ENCODE measurements at regions of chr6 and their contacts with region 1.

Region 1: DNA sequence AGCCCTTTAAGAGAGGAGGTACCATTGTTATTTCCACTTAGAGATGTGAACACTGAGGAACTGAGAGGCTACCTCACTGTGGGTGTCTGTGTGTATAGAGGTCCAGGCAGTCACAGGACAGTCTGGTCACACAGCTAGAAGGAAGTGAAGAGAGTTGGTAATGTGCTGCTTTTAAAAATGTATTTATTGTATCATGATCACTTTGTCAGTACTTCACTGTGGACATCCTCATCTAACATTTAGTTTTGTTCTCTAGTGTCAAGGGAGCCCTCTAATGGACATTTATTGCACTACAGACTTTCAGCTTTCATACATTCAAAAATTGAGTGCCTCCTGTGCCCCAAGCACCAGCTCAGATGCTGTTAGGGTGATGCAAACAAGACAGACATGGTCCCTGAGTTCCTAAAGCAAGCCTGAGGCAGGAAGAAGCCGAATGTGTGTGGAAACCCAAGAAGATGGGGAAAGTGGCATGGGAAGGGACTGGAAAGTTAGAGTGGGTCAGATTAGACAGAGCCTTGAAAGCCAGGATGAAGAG is 123.0 kb downstream of the SLC16A10 start:
- DNase-seq: peak; percentile 44
- H3K4me3 ChIP-seq: no peak overlapping the region
- H3K27ac ChIP-seq: no peak overlapping the region
- H3K4me1 ChIP-seq: no peaks in the 10 kb centered on the region
- H3K27me3 ChIP-seq: no peaks in the 10 kb centered on the region
- CTCF ChIP-seq: peak; percentile 19 to 65 (median 61)
- POLR2A ChIP-seq: no peak

Region 2: DNA sequence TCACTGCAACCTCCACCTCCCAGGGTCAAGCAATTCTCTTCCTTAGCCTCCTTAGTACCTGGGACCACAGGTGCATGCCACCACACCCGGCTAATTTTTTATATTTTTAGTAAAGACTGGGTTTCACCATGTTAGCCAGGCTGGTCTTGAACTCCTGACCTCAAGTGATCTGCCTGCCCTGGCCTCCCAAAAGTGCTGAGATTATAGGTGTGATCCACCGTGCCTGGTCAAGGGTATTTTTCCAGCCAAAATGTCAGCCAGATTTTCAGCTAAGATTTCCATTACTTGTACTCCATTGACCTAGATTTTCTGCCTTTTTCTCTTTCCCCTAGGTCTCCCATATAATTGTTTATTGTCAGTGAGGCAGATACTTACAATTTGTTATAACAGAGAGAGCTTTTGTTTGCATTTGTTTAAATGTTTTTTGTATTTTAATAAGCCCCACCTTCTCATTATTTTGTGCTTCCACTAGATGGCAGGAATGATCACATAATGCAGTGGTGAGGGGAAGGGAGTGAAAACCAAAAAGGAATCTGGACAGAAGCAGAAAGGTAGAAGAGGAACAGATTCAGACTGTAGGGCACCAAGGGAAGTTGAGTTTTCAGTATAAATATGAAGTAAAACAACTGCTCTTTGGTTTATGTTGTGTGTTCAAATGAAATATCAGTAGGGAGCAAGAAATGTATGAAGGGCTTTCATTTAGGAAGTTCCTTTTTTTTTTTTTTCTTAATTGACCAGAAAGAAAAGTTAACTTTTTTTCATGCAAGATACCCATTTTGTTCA is 198.7 kb before region 1 on chr6:
- intact Hi-C with region 1: loop called (anchors 5 kb)
- DNase-seq: no peak
- H3K4me3 ChIP-seq: no peak overlapping the region
- H3K27ac ChIP-seq: no peak overlapping the region
- H3K4me1 ChIP-seq: no peaks in the 10 kb centered on the region
- H3K27me3 ChIP-seq: no peaks in the 10 kb centered on the region
- CTCF ChIP-seq: peak in 3 of 4 experiments; percentile 60 to 64 (median 62)
- POLR2A ChIP-seq: no peak

Region 3: GRCh38 chr6:111057074-111057752 is 153.0 kb before region 1 on chr6:
- intact Hi-C with region 1: loop called (anchors 2 kb)
- DNase-seq: peak; percentile 17
- H3K4me3 ChIP-seq: no peak overlapping the region
- H3K27ac ChIP-seq: no peak overlapping the region
- H3K4me1 ChIP-seq: no peaks in the 10 kb centered on the region
- H3K27me3 ChIP-seq: no peaks in the 10 kb centered on the region
- CTCF ChIP-seq: peak in 3 of 4 experiments; percentile 67 to 70 (median 67)
- POLR2A ChIP-seq: no peak

Region 4: DNA sequence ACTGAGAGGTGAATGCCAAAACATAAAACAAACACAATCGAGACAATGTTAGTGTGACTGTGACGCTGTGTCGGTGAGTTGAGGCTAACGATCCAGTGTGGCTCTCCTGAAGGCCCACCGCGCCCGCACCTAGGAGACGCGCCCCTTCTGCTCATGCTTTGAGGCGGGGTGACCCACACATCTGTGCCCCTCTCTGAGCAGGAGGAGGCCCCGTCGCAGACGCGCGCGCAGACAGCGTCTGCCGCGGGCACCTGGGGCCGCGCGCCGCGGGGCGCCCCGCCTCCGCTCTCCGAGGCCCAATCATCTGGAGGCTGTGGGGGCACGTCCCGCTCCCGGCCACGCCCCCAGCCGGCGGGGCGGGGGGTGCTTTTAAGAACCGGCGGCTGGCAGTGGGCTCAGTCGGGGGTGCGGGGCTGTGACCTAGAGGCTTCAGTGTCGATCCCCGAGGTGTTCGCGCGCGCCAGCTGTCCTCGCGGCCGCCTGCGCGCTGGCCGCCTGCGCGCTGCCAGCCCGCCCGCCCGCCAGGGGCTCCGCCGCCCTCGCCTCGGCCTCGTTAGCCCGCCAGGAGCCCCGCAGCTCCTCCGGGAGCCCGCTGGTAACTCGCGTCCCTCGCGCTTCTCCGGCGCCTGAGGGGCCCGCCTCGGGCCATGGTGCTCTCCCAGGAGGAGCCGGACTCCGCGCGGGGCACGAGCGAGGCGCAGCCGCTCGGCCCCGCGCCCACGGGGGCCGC is 123.0 kb before region 1 on chr6 and contains the start of gene SLC16A10:
- intact Hi-C with region 1: no loop called
- DNase-seq: peak; percentile 79
- H3K4me3 ChIP-seq: peak within 1 kb of the TSS; percentile 47 to 59
- H3K27ac ChIP-seq: peak within 1 kb of the TSS in 1 of 2 donors; percentile 19
- H3K4me1 ChIP-seq: no peaks in the 10 kb centered on the region
- H3K27me3 ChIP-seq: no peaks in the 10 kb centered on the region
- CTCF ChIP-seq: peak in 1 of 4 experiments; percentile 7
- POLR2A ChIP-seq: peak; percentile 61
- total RNA-seq, gene SLC16A10: 11.5 to 12.5 TPM

Region 5: GRCh38 chr6:111259089-111259831 is 49.0 kb after region 1 on chr6:
- intact Hi-C with region 1: no loop called
- DNase-seq: peak; percentile 99
- H3K4me3 ChIP-seq: peak overlapping the region; percentile 55 to 63
- H3K27ac ChIP-seq: peak overlapping the region; percentile 68 to 79
- H3K4me1 ChIP-seq: peaks cover 5% of the 10 kb centered on the region
- H3K27me3 ChIP-seq: no peaks in the 10 kb centered on the region
- CTCF ChIP-seq: peak; percentile 93 to 100 (median 98)
- POLR2A ChIP-seq: peak; percentile 58

Measured in prostate gland (tissue), 2 donors.